ENCODE measurements at regions of chr1 and their contacts with region 1.

Region 1: DNA sequence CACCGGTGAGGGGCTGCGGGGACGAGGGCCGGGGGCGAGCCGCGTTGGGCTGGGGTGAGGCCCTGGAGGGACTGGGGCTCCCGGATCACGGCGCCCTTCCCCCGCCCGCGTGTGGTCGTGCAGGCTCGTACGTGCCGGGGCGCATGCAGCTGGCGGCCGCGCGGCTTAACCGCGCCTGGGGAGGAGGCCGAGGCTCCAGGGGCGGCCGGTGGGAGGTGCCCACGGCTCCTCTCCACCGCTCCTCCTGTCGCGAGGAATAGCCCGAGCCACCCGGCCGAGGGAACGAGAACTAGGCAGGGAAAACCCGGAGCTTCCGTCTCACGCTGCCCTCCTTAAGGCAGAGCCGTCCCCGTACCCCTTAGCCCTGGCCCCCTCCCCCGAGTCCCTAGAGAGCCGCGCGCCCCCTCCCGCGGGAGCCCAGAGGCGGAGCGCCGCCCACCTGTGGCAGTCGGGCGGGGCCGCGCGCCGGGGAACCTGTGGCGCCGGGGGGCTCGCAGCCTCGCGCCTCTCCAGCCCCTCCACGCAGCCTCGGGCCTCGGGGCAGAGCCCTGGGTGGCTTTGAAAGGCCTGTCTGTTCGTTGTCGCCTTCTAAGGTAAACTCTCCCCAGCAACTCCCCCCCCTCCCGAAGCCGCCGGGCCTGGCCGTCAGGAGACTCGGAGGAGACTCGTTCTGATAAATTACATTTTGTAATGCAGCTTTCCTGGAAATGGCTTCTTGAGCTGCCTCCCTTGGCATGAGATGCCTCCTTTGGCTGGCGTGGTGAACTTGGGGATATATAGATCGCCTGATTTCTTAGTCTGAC is 746 bp downstream of the AK4 start:
- DNase-seq: peak; percentile 45
- ATAC-seq: peak; percentile 66
- H3K4me3 ChIP-seq: peak overlapping the region; percentile 87
- H3K27ac ChIP-seq: peak overlapping the region; percentile 55
- H3K4me1 ChIP-seq: peaks cover 5% of the 10 kb centered on the region; the same call in 1 of the 2 replicates
- H3K27me3 ChIP-seq: peaks cover 0 to 4% of the 10 kb centered on the region in 2 experiments; a peak in 1 of 4 replicates
- CTCF ChIP-seq: no peak
- EP300 ChIP-seq: no peak
- POLR2A ChIP-seq: peak; percentile 79
- RAD21 ChIP-seq: no peak

Region 2: GRCh38 chr1:65159801-65160523 is 11.2 kb after region 1 on chr1:
- CTCF ChIA-PET with region 1: interaction called, 4 read pairs
- POLR2A ChIA-PET with region 1: interaction called, 3 read pairs
- RAD21 ChIA-PET with region 1: interaction called, 3 read pairs
- SMC1A ChIA-PET with region 1: interaction called, 18 read pairs
- in situ Hi-C with region 1: no loop called
- intact Hi-C with region 1: no loop called
- DNase-seq: no peak
- ATAC-seq: no peak
- H3K4me3 ChIP-seq: no peak overlapping the region
- H3K27ac ChIP-seq: no peak overlapping the region
- H3K4me1 ChIP-seq: peaks cover 19% of the 10 kb centered on the region
- H3K27me3 ChIP-seq: no peaks in the 10 kb centered on the region
- CTCF ChIP-seq: no peak
- EP300 ChIP-seq: no peak
- POLR2A ChIP-seq: no peak
- RAD21 ChIP-seq: no peak

Measured in GM12878 (cell line).